AG04449 (cell line): ENCODE measurements at regions of chr15 and their contacts with region 1.

Region 1: DNA sequence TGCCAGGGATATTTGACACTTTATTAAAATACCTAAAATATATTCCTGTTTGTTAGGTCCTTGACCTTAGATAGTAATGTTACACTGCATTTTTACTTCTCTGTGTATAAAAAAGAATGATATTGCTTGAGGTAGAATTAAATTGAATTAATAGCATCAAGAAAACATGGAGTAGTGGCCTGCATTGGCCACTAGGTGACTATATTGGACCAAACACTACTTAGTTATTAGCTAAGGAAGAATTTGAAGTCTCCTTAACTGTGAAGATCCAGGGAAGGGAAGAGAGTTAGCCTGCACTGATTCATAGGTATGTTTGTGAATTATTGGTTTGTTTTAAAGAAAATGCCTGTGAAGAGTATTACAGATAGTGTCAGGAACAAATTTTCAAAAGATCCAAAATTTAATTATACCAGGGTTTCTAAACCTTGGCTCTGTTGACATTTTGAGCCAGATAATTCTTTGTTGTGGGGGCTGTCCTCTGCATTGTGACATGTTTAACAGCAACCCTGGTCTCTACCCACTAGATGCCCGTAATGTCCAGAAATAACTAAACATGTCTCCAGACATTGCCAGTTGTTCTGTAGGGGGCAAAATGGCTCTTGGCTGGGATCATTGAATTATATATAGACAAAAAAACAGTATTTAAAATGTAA is 103.6 kb upstream of the THSD4 start:
- DNase-seq: peak; percentile 41
- H3K4me3 ChIP-seq: no peak overlapping the region
- CTCF ChIP-seq: peak; percentile 54

Region 2: GRCh38 chr15:70783599-70784022 is 228.0 kb before region 1 on chr15:
- CTCF ChIA-PET with region 1: no interaction called
- POLR2A ChIA-PET with region 1: no interaction called
- DNase-seq: no peak
- H3K4me3 ChIP-seq: no peak overlapping the region
- CTCF ChIP-seq: no peak

Region 3: DNA sequence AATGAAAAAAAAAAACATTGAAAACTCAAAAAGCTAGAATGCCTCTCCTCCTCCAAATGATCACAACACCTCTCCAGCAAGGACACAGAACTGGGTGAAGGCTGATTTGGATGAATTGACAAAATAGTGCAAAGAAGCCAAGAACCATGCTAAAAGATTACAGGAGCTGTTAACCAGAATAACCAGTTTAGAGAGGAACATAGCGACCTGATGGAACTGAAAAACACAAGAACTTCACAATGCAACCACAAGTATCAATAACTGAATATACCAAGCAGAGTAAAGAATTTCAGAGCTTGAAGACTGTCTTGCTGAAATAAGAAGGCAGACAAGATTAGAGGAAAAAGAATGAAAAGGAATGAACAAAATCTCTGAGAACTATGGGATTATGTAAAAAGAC is 13.0 kb after region 1 on chr15:
- CTCF ChIA-PET with region 1: interaction called, 12 read pairs
- POLR2A ChIA-PET with region 1: no interaction called
- DNase-seq: no peak
- H3K4me3 ChIP-seq: no peak overlapping the region
- CTCF ChIP-seq: no peak

Region 4: DNA sequence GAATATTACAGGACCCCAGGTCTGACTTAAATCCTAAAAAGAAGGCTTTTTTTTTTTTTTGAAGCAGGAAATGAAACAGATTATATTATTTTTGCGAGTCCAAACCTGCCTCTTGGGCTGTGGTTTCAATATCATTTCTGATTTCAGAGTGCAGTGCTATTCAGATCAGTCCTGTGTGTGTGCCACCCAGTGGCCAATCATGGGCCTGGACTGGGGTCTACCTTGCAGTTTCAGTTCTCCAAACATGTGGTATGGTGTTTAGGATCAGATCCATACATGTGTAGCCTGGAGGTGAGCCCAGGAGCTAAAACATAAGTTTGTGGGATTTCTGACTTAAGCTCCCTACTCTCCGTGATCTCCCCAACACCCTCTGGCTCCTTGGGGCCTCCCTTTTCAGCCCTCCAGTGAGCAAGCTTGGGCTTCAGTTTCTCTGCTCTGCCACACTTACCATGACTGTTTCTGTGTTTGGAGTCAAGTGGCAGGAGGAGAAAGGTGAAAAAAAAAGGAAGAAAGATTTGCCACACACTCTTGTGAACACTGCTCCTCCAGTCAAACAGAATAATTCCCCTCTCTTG is 91.6 kb after region 1 on chr15:
- CTCF ChIA-PET with region 1: interaction called, 133 read pairs
- POLR2A ChIA-PET with region 1: no interaction called
- DNase-seq: no peak
- H3K4me3 ChIP-seq: no peak overlapping the region
- CTCF ChIP-seq: peak; percentile 64

Region 5: GRCh38 chr15:71114896-71115554 is 103.4 kb after region 1 on chr15 and contains the start of gene THSD4:
- CTCF ChIA-PET with region 1: interaction called, 133 read pairs
- POLR2A ChIA-PET with region 1: no interaction called
- DNase-seq: no peak
- H3K4me3 ChIP-seq: peak within 1 kb of the TSS; percentile 64
- CTCF ChIP-seq: peak; percentile 98